Caco-2 (cell line): ENCODE measurements at regions of chr5 and their contacts with region 1.

Region 1: DNA sequence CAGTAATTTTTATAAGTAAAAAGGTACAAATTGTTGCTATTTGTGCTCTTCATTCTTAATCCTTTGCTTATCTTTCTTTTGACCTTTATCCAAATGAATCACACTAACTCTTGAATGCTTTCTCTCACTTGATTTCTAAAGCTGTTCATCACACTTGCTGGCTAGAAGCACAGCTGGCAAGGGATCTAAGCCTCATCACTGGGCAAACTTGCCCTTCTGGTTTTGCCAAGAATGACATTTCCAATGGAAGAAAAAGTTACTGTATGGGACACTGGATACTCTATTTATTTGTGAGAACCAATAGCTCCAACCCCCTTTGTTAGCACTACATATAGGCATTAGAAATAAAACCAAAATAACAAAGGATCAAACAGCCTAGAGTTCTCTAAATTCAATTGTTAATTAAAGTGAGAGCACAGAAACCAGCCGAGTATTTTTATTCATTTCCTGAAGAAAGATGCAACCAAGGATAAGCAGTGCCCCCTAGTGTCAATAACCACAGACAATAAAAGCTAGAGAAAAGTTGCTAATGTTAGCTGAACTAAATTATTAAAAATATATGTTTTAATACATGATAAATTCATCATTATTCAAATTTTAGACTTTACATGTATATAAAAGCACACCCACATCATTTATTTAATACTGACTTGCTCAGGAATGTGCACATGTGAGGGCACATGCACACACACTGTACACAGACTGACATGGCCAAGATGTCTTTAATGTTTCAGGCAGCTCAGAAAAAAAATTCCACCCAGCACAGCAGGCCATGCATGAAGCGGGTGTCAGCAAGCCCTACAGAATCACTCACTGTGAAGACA is 59.8 kb upstream of the POU5F2 start:
- DNase-seq: peak in 1 of 2 experiments; percentile 55
- H3K4me3 ChIP-seq: no peak overlapping the region
- H3K4me3 Mint-ChIP-seq: no peak overlapping the region
- H3K27ac Mint-ChIP-seq: no peak overlapping the region
- H3K4me1 ChIP-seq: no peaks in the 10 kb centered on the region
- H3K4me1 Mint-ChIP-seq: no peaks in the 10 kb centered on the region
- H3K27me3 ChIP-seq: no peaks in the 10 kb centered on the region
- H3K27me3 Mint-ChIP-seq: no peaks in the 10 kb centered on the region
- CTCF ChIP-seq: peak; percentile 51 to 68

Region 2: DNA sequence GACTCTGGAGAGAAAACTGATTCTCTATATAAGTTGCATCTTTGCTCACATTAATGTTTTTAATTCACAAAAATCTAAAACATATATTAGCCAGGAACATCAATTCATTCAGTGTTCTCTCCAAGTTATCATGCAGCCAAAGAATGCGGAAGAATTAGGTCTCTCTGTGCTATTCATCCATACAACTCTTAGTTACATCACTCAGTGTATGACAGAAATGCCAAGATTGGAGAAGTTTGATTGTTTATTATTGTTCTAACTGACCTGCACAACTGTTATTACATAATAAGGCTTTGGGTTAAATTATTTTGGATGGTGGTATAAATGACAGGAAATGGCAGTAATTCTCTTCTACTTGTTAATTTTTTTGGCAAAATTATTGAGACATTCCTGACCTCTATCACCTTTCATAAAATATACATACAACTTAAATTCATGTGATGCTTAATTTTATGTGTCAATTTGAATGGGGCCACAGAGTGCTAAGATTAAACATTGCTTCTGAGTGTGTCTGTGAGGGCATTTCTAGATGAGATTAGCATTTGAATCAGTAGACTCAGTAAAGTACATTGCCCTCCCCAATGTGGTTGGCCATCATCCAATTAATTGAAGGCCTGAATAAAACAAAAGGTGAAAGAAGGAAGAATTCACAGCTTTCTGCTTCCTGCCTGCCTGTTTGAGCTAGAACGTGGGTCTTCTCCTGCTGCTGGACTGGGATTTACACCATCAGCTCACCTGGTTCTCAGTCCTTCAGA is 290.4 kb before region 1 on chr5:
- CTCF ChIA-PET with region 1: no interaction called
- POLR2A ChIA-PET with region 1: no interaction called
- intact Hi-C with region 1: loop called (anchors 2 kb)
- DNase-seq: no peak
- H3K4me3 ChIP-seq: no peak overlapping the region
- H3K4me3 Mint-ChIP-seq: no peak overlapping the region
- H3K27ac Mint-ChIP-seq: no peak overlapping the region
- H3K4me1 ChIP-seq: no peaks in the 10 kb centered on the region
- H3K4me1 Mint-ChIP-seq: no peaks in the 10 kb centered on the region
- H3K27me3 ChIP-seq: no peaks in the 10 kb centered on the region
- H3K27me3 Mint-ChIP-seq: no peaks in the 10 kb centered on the region
- CTCF ChIP-seq: no peak

Region 3: GRCh38 chr5:93607367-93608258 is 193.6 kb before region 1 on chr5:
- CTCF ChIA-PET with region 1: interaction called, 11 read pairs
- POLR2A ChIA-PET with region 1: no interaction called
- intact Hi-C with region 1: loop called (anchors 1 kb)
- DNase-seq: peak in 1 of 2 experiments; percentile 45
- H3K4me3 ChIP-seq: no peak overlapping the region
- H3K4me3 Mint-ChIP-seq: no peak overlapping the region
- H3K27ac Mint-ChIP-seq: no peak overlapping the region
- H3K4me1 ChIP-seq: no peaks in the 10 kb centered on the region
- H3K4me1 Mint-ChIP-seq: peaks cover 3% of the 10 kb centered on the region
- H3K27me3 ChIP-seq: peaks cover 3% of the 10 kb centered on the region; the same call in 1 of the 2 replicates
- H3K27me3 Mint-ChIP-seq: peaks cover 26% of the 10 kb centered on the region
- CTCF ChIP-seq: peak; percentile 7 to 63

Region 4: DNA sequence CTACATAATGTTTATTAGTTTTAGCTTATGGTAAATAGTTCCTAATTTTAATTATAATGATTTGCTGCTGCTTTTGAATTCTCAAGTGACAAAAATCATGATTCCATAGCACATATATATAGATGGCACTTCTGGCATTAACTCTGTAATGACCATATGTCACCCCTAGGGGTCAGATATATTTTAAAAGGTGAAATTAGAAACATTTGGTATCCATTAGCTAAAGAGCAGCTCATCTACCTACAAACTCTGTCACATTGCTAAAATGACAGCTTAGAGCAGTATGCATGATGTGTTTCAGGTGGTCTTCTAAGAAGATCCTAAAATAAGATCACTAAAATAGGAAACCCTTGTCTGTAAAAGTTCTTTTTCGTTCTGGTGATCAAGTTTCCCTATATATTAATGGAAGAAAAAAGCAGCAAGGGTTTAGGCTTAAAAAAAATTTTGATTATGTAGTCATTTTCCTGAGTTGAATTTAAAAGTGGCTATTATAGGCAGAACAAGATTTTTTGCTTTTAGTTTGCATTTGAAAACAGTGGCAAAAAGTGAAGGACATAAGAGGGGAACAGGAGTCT is 97.9 kb after region 1 on chr5:
- CTCF ChIA-PET with region 1: no interaction called
- POLR2A ChIA-PET with region 1: no interaction called
- intact Hi-C with region 1: loop called (anchors 5 kb)
- DNase-seq: peak in 1 of 2 experiments; percentile 38
- H3K4me3 ChIP-seq: no peak overlapping the region
- H3K4me3 Mint-ChIP-seq: no peak overlapping the region
- H3K27ac Mint-ChIP-seq: no peak overlapping the region
- H3K4me1 ChIP-seq: no peaks in the 10 kb centered on the region
- H3K4me1 Mint-ChIP-seq: peaks cover 7% of the 10 kb centered on the region
- H3K27me3 ChIP-seq: no peaks in the 10 kb centered on the region
- H3K27me3 Mint-ChIP-seq: no peaks in the 10 kb centered on the region
- CTCF ChIP-seq: peak; percentile 31 to 56